SK-N-SH (cell line): ENCODE measurements at regions of chr4 and their contacts with region 1.

Region 1: GRCh38 chr4:72326692-72327632 is 242.1 kb downstream of the ADAMTS3 start:
- DNase-seq: peak; percentile 21
- H3K4me3 ChIP-seq: no peak overlapping the region
- H3K27ac ChIP-seq: peak overlapping the region in 1 of 2 experiments; percentile 34; a peak in 2 of 4 replicates
- H3K4me1 ChIP-seq: peaks cover 0 to 11% of the 10 kb centered on the region in 2 experiments; a peak in 2 of 4 replicates
- H3K27me3 ChIP-seq: no peaks in the 10 kb centered on the region
- CTCF ChIP-seq: peak; percentile 85
- EP300 ChIP-seq: no peak
- RAD21 ChIP-seq: peak; percentile 90

Region 2: GRCh38 chr4:72302981-72303704 is 23.8 kb before region 1 on chr4:
- CTCF ChIA-PET with region 1: interaction called, 10 read pairs
- POLR2A ChIA-PET with region 1: no interaction called
- DNase-seq: peak; percentile 16
- H3K4me3 ChIP-seq: peak overlapping the region in 1 of 2 experiments; percentile 10; a peak in 1 of 4 replicates
- H3K27ac ChIP-seq: no peak overlapping the region
- H3K4me1 ChIP-seq: no peaks in the 10 kb centered on the region; a peak in 1 of 4 replicates
- H3K27me3 ChIP-seq: no peaks in the 10 kb centered on the region
- CTCF ChIP-seq: peak; percentile 86
- EP300 ChIP-seq: no peak
- RAD21 ChIP-seq: peak; percentile 50

Region 3: GRCh38 chr4:72340803-72341431 is 14.0 kb after region 1 on chr4:
- CTCF ChIA-PET with region 1: interaction called, 19 read pairs
- POLR2A ChIA-PET with region 1: no interaction called
- DNase-seq: no peak
- H3K4me3 ChIP-seq: no peak overlapping the region
- H3K27ac ChIP-seq: peak overlapping the region in 1 of 2 experiments; percentile 22; a peak in 1 of 4 replicates
- H3K4me1 ChIP-seq: no peaks in the 10 kb centered on the region; a peak in 2 of 4 replicates
- H3K27me3 ChIP-seq: no peaks in the 10 kb centered on the region
- CTCF ChIP-seq: no peak
- EP300 ChIP-seq: peak in 1 of 2 experiments; percentile 19; a peak in 1 of 4 replicates
- RAD21 ChIP-seq: no peak

Region 4: GRCh38 chr4:72463724-72464123 is 136.8 kb after region 1 on chr4:
- CTCF ChIA-PET with region 1: interaction called, 54 read pairs
- POLR2A ChIA-PET with region 1: no interaction called
- DNase-seq: peak; percentile 6
- H3K4me3 ChIP-seq: no peak overlapping the region
- H3K27ac ChIP-seq: peak overlapping the region in 1 of 2 experiments; percentile 51; a peak in 2 of 4 replicates
- H3K4me1 ChIP-seq: peaks cover 0 to 8% of the 10 kb centered on the region in 2 experiments; a peak in 2 of 4 replicates
- H3K27me3 ChIP-seq: no peaks in the 10 kb centered on the region
- CTCF ChIP-seq: no peak
- EP300 ChIP-seq: 0 out of 4 replicates have a peak, but pooled peaks of 1 of the 2 experiments have one; percentile 9
- RAD21 ChIP-seq: no peak

Region 5: GRCh38 chr4:72496112-72496511 is 169.2 kb after region 1 on chr4:
- CTCF ChIA-PET with region 1: interaction called, 11 read pairs
- POLR2A ChIA-PET with region 1: no interaction called
- DNase-seq: no peak
- H3K4me3 ChIP-seq: no peak overlapping the region
- H3K27ac ChIP-seq: no peak overlapping the region
- H3K4me1 ChIP-seq: no peaks in the 10 kb centered on the region
- H3K27me3 ChIP-seq: no peaks in the 10 kb centered on the region
- CTCF ChIP-seq: peak; percentile 43
- EP300 ChIP-seq: no peak
- RAD21 ChIP-seq: peak; percentile 55